ENCODE measurements at regions of chr10 and their contacts with region 1.

Region 1: DNA sequence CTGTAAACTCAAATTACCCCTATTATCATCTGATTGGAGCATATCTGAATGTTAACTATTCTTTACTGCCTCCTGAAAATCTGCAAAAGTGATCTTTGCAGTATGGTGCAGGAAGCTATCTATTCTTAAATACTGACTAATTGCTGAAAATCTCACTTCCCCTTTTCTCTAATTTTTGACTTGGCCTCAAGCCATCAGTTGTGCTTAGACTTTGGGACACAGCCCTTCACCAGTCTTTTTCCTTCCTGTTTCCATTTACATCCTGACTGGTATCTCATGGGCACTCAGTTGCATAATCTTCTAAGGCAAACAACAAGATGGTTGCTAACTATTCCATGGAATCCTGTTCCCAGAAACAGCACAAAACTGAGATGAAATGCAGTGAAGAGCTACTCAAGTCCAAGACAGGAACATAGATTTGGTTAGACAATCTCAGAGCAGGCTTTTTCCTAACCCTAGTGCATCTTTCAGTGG is 228.5 kb downstream of the SORCS1 start:
- DNase-seq: no peak
- H3K4me3 ChIP-seq: no peak overlapping the region
- H3K27ac ChIP-seq: no peak overlapping the region
- H3K4me1 ChIP-seq: no peaks in the 10 kb centered on the region
- H3K27me3 ChIP-seq: no peaks in the 10 kb centered on the region
- CTCF ChIP-seq: no peak
- EP300 ChIP-seq: no peak
- POLR2A ChIP-seq: no peak

Region 2: GRCh38 chr10:105634281-105634680 is 1301.7 kb before region 1 on chr10:
- intact Hi-C with region 1: loop called in 1 of 4 experiments (anchors 5 kb)
- DNase-seq: no peak
- H3K4me3 ChIP-seq: no peak overlapping the region
- H3K27ac ChIP-seq: no peak overlapping the region
- H3K4me1 ChIP-seq: no peaks in the 10 kb centered on the region
- H3K27me3 ChIP-seq: no peaks in the 10 kb centered on the region
- CTCF ChIP-seq: no peak
- EP300 ChIP-seq: no peak
- POLR2A ChIP-seq: no peak

Region 3: GRCh38 chr10:106785528-106785927 is 150.5 kb before region 1 on chr10:
- intact Hi-C with region 1: no loop called
- DNase-seq: no peak
- H3K4me3 ChIP-seq: no peak overlapping the region
- H3K27ac ChIP-seq: no peak overlapping the region
- H3K4me1 ChIP-seq: no peaks in the 10 kb centered on the region
- H3K27me3 ChIP-seq: no peaks in the 10 kb centered on the region
- CTCF ChIP-seq: no peak
- EP300 ChIP-seq: no peak
- POLR2A ChIP-seq: no peak

Region 4: DNA sequence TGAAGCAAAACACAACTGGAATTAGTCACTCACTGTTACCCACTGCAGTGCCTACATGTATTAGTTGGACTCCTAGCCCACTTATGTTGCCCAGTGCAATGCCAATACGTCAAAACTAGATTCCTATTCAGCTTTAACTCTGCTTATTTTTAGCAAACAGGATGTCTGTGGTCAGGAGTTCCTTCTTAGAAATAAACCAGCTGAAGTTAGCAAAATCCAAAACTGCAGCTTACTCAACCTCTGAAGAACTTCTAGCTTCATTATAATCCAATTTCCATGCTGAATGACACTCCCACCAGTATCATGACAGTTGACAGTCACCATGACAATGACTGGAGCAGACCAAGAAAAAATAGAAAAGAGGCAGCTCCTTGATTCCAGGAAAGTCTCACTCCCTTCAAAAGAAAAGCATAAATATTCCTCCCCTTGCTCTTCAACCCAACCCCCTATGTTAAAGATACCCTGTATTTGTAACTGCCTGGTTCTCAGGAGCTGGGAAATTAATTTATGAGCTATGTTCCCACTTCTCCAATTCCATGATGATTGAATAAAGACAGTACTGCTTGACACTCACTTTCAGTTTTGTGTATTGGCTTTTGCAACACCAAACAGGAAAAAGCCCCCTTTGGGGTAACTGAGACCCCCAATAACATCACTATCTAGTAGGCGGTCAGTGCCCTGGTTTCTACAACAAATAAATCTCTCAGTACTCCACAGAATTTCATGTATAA is 98.9 kb before region 1 on chr10:
- intact Hi-C with region 1: no loop called
- DNase-seq: no peak
- H3K4me3 ChIP-seq: no peak overlapping the region
- H3K27ac ChIP-seq: no peak overlapping the region
- H3K4me1 ChIP-seq: no peaks in the 10 kb centered on the region
- H3K27me3 ChIP-seq: no peaks in the 10 kb centered on the region
- CTCF ChIP-seq: no peak
- EP300 ChIP-seq: no peak
- POLR2A ChIP-seq: no peak

Region 5: GRCh38 chr10:107894516-107894915 is 958.5 kb after region 1 on chr10:
- intact Hi-C with region 1: no loop called
- DNase-seq: no peak
- H3K4me3 ChIP-seq: no peak overlapping the region
- H3K27ac ChIP-seq: no peak overlapping the region
- H3K4me1 ChIP-seq: no peaks in the 10 kb centered on the region
- H3K27me3 ChIP-seq: no peaks in the 10 kb centered on the region
- CTCF ChIP-seq: no peak
- EP300 ChIP-seq: no peak
- POLR2A ChIP-seq: no peak